CD14-positive monocyte (primary cell): ENCODE measurements at regions of chr21 and their contacts with region 1.

Region 1: GRCh38 chr21:25895565-25896205 is 160.9 kb downstream of the GABPA start:
- DNase-seq: peak; percentile 22 to 71 (median 52)
- H3K4me3 ChIP-seq: no peak overlapping the region
- H3K4me3 Mint-ChIP-seq: no peak overlapping the region
- H3K27ac ChIP-seq: no peak overlapping the region
- H3K27ac Mint-ChIP-seq: no peak overlapping the region
- H3K4me1 ChIP-seq: no peaks in the 10 kb centered on the region
- H3K4me1 Mint-ChIP-seq: no peaks in the 10 kb centered on the region
- H3K27me3 ChIP-seq: no peaks in the 10 kb centered on the region
- H3K27me3 Mint-ChIP-seq: no peaks in the 10 kb centered on the region
- CTCF ChIP-seq: peak; percentile 76

Region 2: GRCh38 chr21:25801217-25802014 is 94.3 kb before region 1 on chr21:
- intact Hi-C with region 1: no loop called
- DNase-seq: peak; percentile 76 to 85 (median 85)
- H3K4me3 ChIP-seq: peak overlapping the region in 1 of 3 experiments; percentile 30
- H3K4me3 Mint-ChIP-seq: peak overlapping the region in 1 of 2 donors; percentile 65
- H3K27ac ChIP-seq: no peak overlapping the region
- H3K27ac Mint-ChIP-seq: peak overlapping the region in 1 of 7 donors; percentile 20
- H3K4me1 ChIP-seq: peaks cover 3 to 6% of the 10 kb centered on the region in 2 donors
- H3K4me1 Mint-ChIP-seq: peaks cover 7% of the 10 kb centered on the region
- H3K27me3 ChIP-seq: no peaks in the 10 kb centered on the region
- H3K27me3 Mint-ChIP-seq: peaks cover 2 to 7% (median 6%) of the 10 kb centered on the region in 3 donors
- CTCF ChIP-seq: peak; percentile 100

Region 3: GRCh38 chr21:25956993-25957714 is 61.5 kb after region 1 on chr21:
- intact Hi-C with region 1: loop called (anchors 5 kb)
- DNase-seq: no peak
- H3K4me3 ChIP-seq: no peak overlapping the region
- H3K4me3 Mint-ChIP-seq: no peak overlapping the region
- H3K27ac ChIP-seq: no peak overlapping the region
- H3K27ac Mint-ChIP-seq: no peak overlapping the region
- H3K4me1 ChIP-seq: no peaks in the 10 kb centered on the region
- H3K4me1 Mint-ChIP-seq: peaks cover 2% of the 10 kb centered on the region
- H3K27me3 ChIP-seq: no peaks in the 10 kb centered on the region
- H3K27me3 Mint-ChIP-seq: no peaks in the 10 kb centered on the region
- CTCF ChIP-seq: no peak

Region 4: GRCh38 chr21:25970254-25970930 is 74.7 kb after region 1 on chr21:
- intact Hi-C with region 1: no loop called
- DNase-seq: peak in 1 of 3 donors; percentile 9
- H3K4me3 ChIP-seq: peak overlapping the region in 1 of 3 experiments; percentile 24
- H3K4me3 Mint-ChIP-seq: peak overlapping the region; percentile 57 to 59
- H3K27ac ChIP-seq: peak overlapping the region in 1 of 2 donors; percentile 58
- H3K27ac Mint-ChIP-seq: peak overlapping the region; percentile 58 to 89 (median 81)
- H3K4me1 ChIP-seq: peaks cover 51 to 53% of the 10 kb centered on the region in 2 donors
- H3K4me1 Mint-ChIP-seq: peaks cover 43% of the 10 kb centered on the region
- H3K27me3 ChIP-seq: no peaks in the 10 kb centered on the region
- H3K27me3 Mint-ChIP-seq: no peaks in the 10 kb centered on the region
- CTCF ChIP-seq: no peak

Region 5: GRCh38 chr21:26544201-26544775 is 648.6 kb after region 1 on chr21:
- intact Hi-C with region 1: no loop called
- DNase-seq: no peak
- H3K4me3 ChIP-seq: no peak overlapping the region
- H3K4me3 Mint-ChIP-seq: no peak overlapping the region
- H3K27ac ChIP-seq: no peak overlapping the region
- H3K27ac Mint-ChIP-seq: no peak overlapping the region
- H3K4me1 ChIP-seq: peaks cover 18 to 25% of the 10 kb centered on the region in 2 donors
- H3K4me1 Mint-ChIP-seq: peaks cover 25% of the 10 kb centered on the region
- H3K27me3 ChIP-seq: no peaks in the 10 kb centered on the region
- H3K27me3 Mint-ChIP-seq: peaks cover 0 to 1% (median 0%) of the 10 kb centered on the region in 3 donors
- CTCF ChIP-seq: no peak